ENCODE measurements at regions of chr7 and their contacts with region 1.

Region 1: GRCh38 chr7:88669913-88670312 is 89.6 kb upstream of the ZNF804B start:
- DNase-seq: no peak
- H3K4me3 ChIP-seq: no peak overlapping the region
- H3K27ac ChIP-seq: no peak overlapping the region
- H3K4me1 ChIP-seq: no peaks in the 10 kb centered on the region
- H3K27me3 ChIP-seq: no peaks in the 10 kb centered on the region
- CTCF ChIP-seq: no peak

Region 2: GRCh38 chr7:88615336-88615735 is 54.6 kb before region 1 on chr7:
- CTCF ChIA-PET with region 1: no interaction called
- POLR2A ChIA-PET with region 1: no interaction called
- intact Hi-C with region 1: loop called (anchors 10 kb)
- DNase-seq: no peak
- H3K4me3 ChIP-seq: no peak overlapping the region
- H3K27ac ChIP-seq: no peak overlapping the region
- H3K4me1 ChIP-seq: no peaks in the 10 kb centered on the region
- H3K27me3 ChIP-seq: no peaks in the 10 kb centered on the region
- CTCF ChIP-seq: no peak

Region 3: GRCh38 chr7:88881136-88881535 is 211.2 kb after region 1 on chr7:
- CTCF ChIA-PET with region 1: no interaction called
- POLR2A ChIA-PET with region 1: no interaction called
- intact Hi-C with region 1: no loop called
- DNase-seq: no peak
- H3K4me3 ChIP-seq: no peak overlapping the region
- H3K27ac ChIP-seq: no peak overlapping the region
- H3K4me1 ChIP-seq: no peaks in the 10 kb centered on the region
- H3K27me3 ChIP-seq: peaks cover 7% of the 10 kb centered on the region
- CTCF ChIP-seq: no peak